Activated CD4-positive, alpha-beta T cell treated with anti-CD3 and anti-CD28 coated beads for 36 hours (primary cell): ENCODE measurements at regions of chr21 and their contacts with region 1.

Region 1: DNA sequence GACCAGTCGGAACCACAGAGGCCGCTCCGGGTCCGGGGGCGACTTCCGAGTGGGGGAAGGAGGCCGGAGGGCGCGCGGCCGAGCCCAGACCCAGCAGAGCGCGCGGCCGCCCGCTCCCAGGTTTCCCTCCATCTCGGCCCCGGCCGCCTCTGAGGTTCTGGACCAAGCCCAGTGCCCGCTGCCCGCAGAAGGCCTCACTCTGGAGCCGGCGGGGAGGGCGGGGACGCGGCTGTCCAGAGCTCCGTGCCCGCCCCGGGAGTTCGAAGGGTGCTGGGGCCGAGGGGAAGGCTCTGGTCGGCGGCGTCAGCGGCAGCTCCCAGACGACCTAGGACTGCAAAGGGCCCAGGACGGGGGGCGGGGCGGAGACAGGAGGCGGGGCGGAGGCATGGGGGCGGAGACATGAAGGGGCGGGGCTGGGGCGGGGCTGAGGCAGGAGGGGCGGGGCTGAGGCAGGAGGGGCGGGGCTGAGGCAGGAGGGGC is 48.0 kb upstream of the SLC19A1 start:
- DNase-seq: peak; percentile 92
- ATAC-seq: peak; percentile 60
- H3K4me3 Mint-ChIP-seq: peak overlapping the region; percentile 36
- H3K27ac Mint-ChIP-seq: no peak overlapping the region
- H3K4me1 Mint-ChIP-seq: peaks cover 16% of the 10 kb centered on the region
- H3K27me3 Mint-ChIP-seq: peaks cover 16% of the 10 kb centered on the region

Region 2: GRCh38 chr21:44927587-44928461 is 662.5 kb before region 1 on chr21:
- CTCF ChIA-PET with region 1: no interaction called
- POLR2A ChIA-PET with region 1: no interaction called
- intact Hi-C with region 1: loop called in 1 of 2 experiments (anchors 5 kb)
- DNase-seq: peak; percentile 97
- ATAC-seq: peak; percentile 74
- H3K4me3 Mint-ChIP-seq: peak overlapping the region; percentile 90
- H3K27ac Mint-ChIP-seq: peak overlapping the region; percentile 94
- H3K4me1 Mint-ChIP-seq: peaks cover 80% of the 10 kb centered on the region
- H3K27me3 Mint-ChIP-seq: no peaks in the 10 kb centered on the region

Region 3: GRCh38 chr21:45287438-45288391 is 302.6 kb before region 1 on chr21 and contains the start of gene POFUT2:
- CTCF ChIA-PET with region 1: no interaction called
- POLR2A ChIA-PET with region 1: no interaction called
- intact Hi-C with region 1: loop called in 1 of 2 experiments (anchors 1 kb)
- DNase-seq: peak; percentile 99
- ATAC-seq: peak; percentile 86
- H3K4me3 Mint-ChIP-seq: peak within 1 kb of the TSS; percentile 75
- H3K27ac Mint-ChIP-seq: no peak within 1 kb of the TSS
- H3K4me1 Mint-ChIP-seq: peaks cover 15% of the 10 kb centered on the region
- H3K27me3 Mint-ChIP-seq: no peaks in the 10 kb centered on the region
- total RNA-seq, gene POFUT2: 14.7 to 14.9 TPM

Region 4: GRCh38 chr21:45542242-45542666 is 48.0 kb before region 1 on chr21 and contains the start of gene SLC19A1:
- CTCF ChIA-PET with region 1: no interaction called
- POLR2A ChIA-PET with region 1: no interaction called
- intact Hi-C with region 1: loop called in 1 of 2 experiments (anchors 1 kb)
- DNase-seq: peak; percentile 86
- ATAC-seq: peak; percentile 86
- H3K4me3 Mint-ChIP-seq: peak within 1 kb of the TSS; percentile 80
- H3K27ac Mint-ChIP-seq: peak within 1 kb of the TSS; percentile 80
- H3K4me1 Mint-ChIP-seq: peaks cover 20% of the 10 kb centered on the region
- H3K27me3 Mint-ChIP-seq: no peaks in the 10 kb centered on the region
- total RNA-seq, gene SLC19A1: 46.1 to 50.0 TPM

Region 5: GRCh38 chr21:45615145-45615711 is 24.9 kb after region 1 on chr21:
- CTCF ChIA-PET with region 1: no interaction called
- POLR2A ChIA-PET with region 1: no interaction called
- intact Hi-C with region 1: loop called in 1 of 2 experiments (anchors 1 kb)
- DNase-seq: peak; percentile 90
- ATAC-seq: peak; percentile 91
- H3K4me3 Mint-ChIP-seq: peak overlapping the region; percentile 75
- H3K27ac Mint-ChIP-seq: peak overlapping the region; percentile 85
- H3K4me1 Mint-ChIP-seq: peaks cover 38% of the 10 kb centered on the region
- H3K27me3 Mint-ChIP-seq: no peaks in the 10 kb centered on the region

Region 6: GRCh38 chr21:45768751-45769070 is 178.4 kb after region 1 on chr21:
- CTCF ChIA-PET with region 1: no interaction called
- POLR2A ChIA-PET with region 1: no interaction called
- intact Hi-C with region 1: loop called in 1 of 2 experiments (anchors 1 kb)
- DNase-seq: peak; percentile 64
- ATAC-seq: peak; percentile 3
- H3K4me3 Mint-ChIP-seq: peak overlapping the region; percentile 62
- H3K27ac Mint-ChIP-seq: peak overlapping the region; percentile 98
- H3K4me1 Mint-ChIP-seq: peaks cover 57% of the 10 kb centered on the region
- H3K27me3 Mint-ChIP-seq: no peaks in the 10 kb centered on the region